Left lung (tissue), 14 donors: ENCODE measurements at regions of chr14 and their contacts with region 1.

Region 1: DNA sequence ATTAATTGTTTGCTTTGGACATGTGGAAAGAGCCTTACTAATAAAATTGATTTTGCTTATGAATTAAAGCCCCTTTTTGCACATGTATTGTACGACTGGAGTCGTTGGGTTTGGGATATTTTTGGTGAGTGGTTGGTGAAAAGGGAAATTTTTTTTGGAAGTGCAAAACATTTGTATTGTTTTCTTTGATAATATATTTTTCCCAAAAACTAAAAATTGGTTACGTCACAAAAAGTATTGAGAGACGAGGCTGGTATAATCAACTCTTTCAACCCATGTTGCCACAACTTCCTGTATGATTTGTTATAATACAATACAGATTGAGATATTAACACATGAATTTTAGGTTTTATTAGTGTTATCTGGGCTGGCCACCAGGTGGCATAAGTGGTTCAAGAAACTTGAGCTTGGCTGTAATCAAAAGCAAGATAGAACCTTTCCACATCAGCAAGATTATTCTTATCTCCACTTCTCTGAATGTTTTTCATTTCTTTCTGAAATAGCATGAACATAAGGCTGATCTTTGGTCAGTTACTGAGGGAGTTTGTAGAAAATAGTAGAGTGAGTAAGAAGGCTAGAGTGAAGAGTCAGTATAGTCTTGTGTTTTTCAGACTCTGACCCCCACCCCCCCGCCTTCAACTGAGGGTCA is 8.7 kb downstream of the NGDN start:
- DNase-seq: peak in 3 of 4 donors; percentile 37 to 70 (median 55)
- ATAC-seq: peak; percentile 87
- H3K4me3 ChIP-seq: no peak overlapping the region
- H3K27ac ChIP-seq: no peak overlapping the region
- H3K4me1 ChIP-seq: no peaks in the 10 kb centered on the region
- H3K27me3 ChIP-seq: no peaks in the 10 kb centered on the region
- CTCF ChIP-seq: peak; percentile 53 to 61

Region 2: GRCh38 chr14:23345987-23346692 is 132.1 kb before region 1 on chr14:
- intact Hi-C with region 1: loop called in 1 of 2 experiments (anchors 10 kb)
- DNase-seq: no peak
- ATAC-seq: no peak
- H3K4me3 ChIP-seq: no peak overlapping the region
- H3K27ac ChIP-seq: no peak overlapping the region
- H3K4me1 ChIP-seq: no peaks in the 10 kb centered on the region
- H3K27me3 ChIP-seq: peaks cover 0 to 7% of the 10 kb centered on the region in 2 donors
- CTCF ChIP-seq: no peak

Region 3: GRCh38 chr14:23562268-23563203 is 84.3 kb after region 1 on chr14:
- intact Hi-C with region 1: loop called in 1 of 2 experiments (anchors 5 kb)
- DNase-seq: no peak
- ATAC-seq: peak; percentile 42
- H3K4me3 ChIP-seq: no peak overlapping the region
- H3K27ac ChIP-seq: no peak overlapping the region
- H3K4me1 ChIP-seq: peaks cover 7 to 30% of the 10 kb centered on the region in 2 donors
- H3K27me3 ChIP-seq: no peaks in the 10 kb centered on the region
- CTCF ChIP-seq: peak; percentile 80 to 95